PC-3 (cell line): ENCODE measurements at regions of chr12 and their contacts with region 1.

Region 1: GRCh38 chr12:68610370-68611093 is at the start of gene RAP1B:
- DNase-seq: peak; percentile 92
- ATAC-seq: peak; percentile 86
- H3K4me3 ChIP-seq: peak within 1 kb of the TSS; percentile 91
- H3K27ac ChIP-seq: peak within 1 kb of the TSS; percentile 57
- H3K4me1 ChIP-seq: peaks cover 38% of the 10 kb centered on the region
- H3K27me3 ChIP-seq: no peaks in the 10 kb centered on the region
- CTCF ChIP-seq: no peak
- total RNA-seq, gene RAP1B: 98.0 and 103 TPM in 2 replicates

Region 2: DNA sequence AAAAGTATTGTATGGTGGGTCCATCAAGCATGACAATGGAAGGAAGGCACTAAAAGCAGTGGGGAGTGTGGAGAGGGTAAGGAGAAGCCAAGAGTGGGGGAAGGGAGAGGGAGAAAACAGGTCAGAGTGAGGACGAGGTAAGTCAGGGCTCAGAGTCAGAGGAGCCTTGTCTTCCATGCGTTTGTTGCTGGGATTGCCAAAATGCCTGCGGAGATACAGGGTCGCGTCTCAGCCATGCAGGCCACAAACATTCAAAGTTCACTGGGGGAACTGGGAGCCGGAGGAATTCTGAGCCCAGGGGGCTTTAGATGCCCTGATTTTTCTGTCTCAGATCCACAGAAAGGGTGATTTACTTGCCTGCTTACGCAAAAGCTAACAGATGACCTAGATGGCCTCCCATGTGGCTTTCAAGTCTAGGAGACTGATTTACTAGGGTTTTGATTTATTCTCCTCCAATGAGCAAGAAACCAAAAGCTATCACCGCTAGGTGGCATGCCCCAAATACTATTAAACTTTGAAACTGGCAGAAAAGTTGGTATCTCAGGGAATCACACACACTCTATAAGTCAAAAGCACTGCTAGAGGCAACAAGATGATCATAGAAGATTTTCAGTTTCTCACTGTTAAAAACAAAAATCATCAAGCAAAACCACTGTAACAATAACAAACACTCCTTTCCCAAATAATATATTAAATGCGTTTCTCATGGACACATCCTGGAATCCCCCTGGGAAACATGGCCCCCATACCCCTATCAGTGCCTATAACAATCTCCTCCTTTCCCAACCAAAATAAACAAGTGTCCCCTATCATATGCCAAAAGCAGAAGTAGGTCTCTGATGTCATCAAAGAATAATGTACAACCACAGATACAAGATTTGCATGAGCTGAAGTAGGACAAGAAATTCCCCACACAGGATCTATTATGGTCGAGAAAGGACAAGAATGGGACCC is 251.7 kb before region 1 on chr12:
- CTCF ChIA-PET with region 1: no interaction called
- POLR2A ChIA-PET with region 1: no interaction called
- intact Hi-C with region 1: loop called (anchors 2 kb)
- DNase-seq: peak; percentile 84
- ATAC-seq: peak; percentile 86
- H3K4me3 ChIP-seq: no peak overlapping the region
- H3K27ac ChIP-seq: no peak overlapping the region
- H3K4me1 ChIP-seq: peaks cover 4% of the 10 kb centered on the region; the same call in 1 of the 2 replicates
- H3K27me3 ChIP-seq: no peaks in the 10 kb centered on the region
- CTCF ChIP-seq: peak; percentile 86

Region 3: DNA sequence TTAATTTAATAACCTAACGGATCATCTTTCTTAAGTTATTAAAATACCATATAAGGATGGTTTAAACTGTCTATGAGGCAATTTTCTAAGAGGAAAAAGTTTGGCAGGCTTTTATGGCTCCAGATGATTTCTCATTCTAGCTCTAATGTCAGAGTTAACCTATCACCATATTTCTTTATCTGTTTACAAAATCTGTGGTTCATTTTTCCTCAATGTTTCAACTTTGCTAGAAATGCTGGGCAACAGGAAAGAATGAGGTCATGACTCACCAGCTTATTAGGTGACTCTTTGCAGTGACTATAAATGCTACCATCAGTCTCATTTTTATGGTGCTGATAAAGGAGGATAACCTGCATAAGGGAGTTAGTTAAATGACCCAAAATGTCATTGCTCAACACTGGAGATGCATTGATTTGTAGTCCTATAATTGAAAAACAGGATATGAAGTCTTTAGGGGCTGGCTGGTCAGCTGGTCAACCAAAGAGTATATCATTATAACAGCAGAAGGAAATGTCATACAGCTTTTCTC is 45.1 kb before region 1 on chr12:
- CTCF ChIA-PET with region 1: no interaction called
- POLR2A ChIA-PET with region 1: interaction called, 3 read pairs
- intact Hi-C with region 1: loop called (anchors 5 kb)
- DNase-seq: peak; percentile 96
- ATAC-seq: peak; percentile 95
- H3K4me3 ChIP-seq: no peak overlapping the region
- H3K27ac ChIP-seq: peak overlapping the region; percentile 66
- H3K4me1 ChIP-seq: peaks cover 27% of the 10 kb centered on the region
- H3K27me3 ChIP-seq: no peaks in the 10 kb centered on the region
- CTCF ChIP-seq: no peak

Region 4: GRCh38 chr12:68686595-68687521 is 76.3 kb after region 1 on chr12 and contains the start of gene NUP107:
- CTCF ChIA-PET with region 1: no interaction called
- POLR2A ChIA-PET with region 1: no interaction called
- intact Hi-C with region 1: loop called (anchors 2 kb)
- DNase-seq: peak; percentile 100
- ATAC-seq: peak; percentile 97
- H3K4me3 ChIP-seq: peak within 1 kb of the TSS; percentile 83
- H3K27ac ChIP-seq: peak within 1 kb of the TSS; percentile 70
- H3K4me1 ChIP-seq: peaks cover 19% of the 10 kb centered on the region; the same call in 1 of the 2 replicates
- H3K27me3 ChIP-seq: no peaks in the 10 kb centered on the region
- CTCF ChIP-seq: no peak
- total RNA-seq, gene NUP107: 89.3 and 106 TPM in 2 replicates

Region 5: DNA sequence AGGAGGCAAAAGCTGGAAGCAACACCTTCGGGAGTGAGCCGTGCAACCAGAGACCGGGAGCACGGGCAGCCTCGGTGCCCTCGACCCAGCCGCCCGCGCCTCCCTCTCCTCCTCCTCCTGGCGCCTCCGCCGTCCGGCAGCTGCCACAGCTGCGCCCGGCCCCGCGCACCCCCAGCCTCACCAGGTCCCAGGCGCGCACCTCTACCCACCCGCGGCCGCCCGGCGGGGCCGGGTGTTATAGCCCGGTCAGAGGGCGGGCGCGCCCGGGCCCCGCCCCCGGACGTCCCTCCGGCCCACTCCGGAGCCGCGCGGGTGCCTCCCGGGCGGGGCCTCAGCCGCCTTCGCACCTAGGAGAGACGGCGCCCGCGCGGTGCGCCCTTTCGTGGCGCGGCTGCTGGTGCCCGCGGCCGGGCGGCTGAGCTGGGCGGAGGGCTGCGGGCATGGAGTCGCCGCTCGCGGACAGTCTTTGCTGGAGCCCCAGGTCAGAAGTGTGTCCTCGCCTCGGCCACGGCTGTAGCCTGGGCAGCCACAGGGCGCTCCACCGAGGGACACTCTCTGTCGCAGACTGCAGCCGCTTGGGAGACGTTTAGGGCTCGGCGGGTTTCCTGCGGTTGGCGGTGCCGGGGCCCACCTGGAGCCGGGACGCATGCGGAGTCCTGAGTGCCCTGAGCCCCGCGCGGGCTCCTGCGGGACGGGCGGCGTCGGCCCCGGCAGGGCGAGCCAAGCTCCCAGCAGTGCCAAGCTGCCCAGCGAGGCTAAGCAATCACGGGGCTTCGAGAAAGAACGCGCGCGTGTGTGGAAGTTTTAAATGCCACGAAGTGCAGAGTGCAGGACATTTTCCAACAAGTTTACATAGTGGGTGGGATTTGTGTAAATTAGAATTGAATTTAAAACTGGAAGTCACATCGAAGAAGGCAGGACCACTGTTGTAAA is 322.7 kb after region 1 on chr12 and contains the start of gene CPM:
- CTCF ChIA-PET with region 1: no interaction called
- POLR2A ChIA-PET with region 1: no interaction called
- intact Hi-C with region 1: no loop called
- DNase-seq: peak; percentile 72
- ATAC-seq: peak; percentile 97
- H3K4me3 ChIP-seq: peak within 1 kb of the TSS; percentile 83
- H3K27ac ChIP-seq: no peak within 1 kb of the TSS
- H3K4me1 ChIP-seq: peaks cover 12% of the 10 kb centered on the region; the same call in 1 of the 2 replicates
- H3K27me3 ChIP-seq: peaks cover 4% of the 10 kb centered on the region; the same call in 1 of the 2 replicates
- CTCF ChIP-seq: no peak
- total RNA-seq, gene CPM: 3.1 and 5.3 TPM in 2 replicates